ENCODE measurements at regions of chr4 and their contacts with region 1.

Region 1: GRCh38 chr4:173420324-173420752 is 21.4 kb upstream of the SCRG1 start:
- DNase-seq: no peak
- ATAC-seq: peak in 2 of 4 donors; percentile 44 to 56
- H3K4me3 ChIP-seq: peak overlapping the region in 3 of 12 donors; percentile 10 to 25 (median 22)
- H3K27ac ChIP-seq: no peak overlapping the region
- H3K4me1 ChIP-seq: peaks cover 0 to 8% (median 2%) of the 10 kb centered on the region in 12 donors
- H3K27me3 ChIP-seq: no peaks in the 10 kb centered on the region
- CTCF ChIP-seq: peak; percentile 25 to 68 (median 54)
- POLR2A ChIP-seq: no peak

Region 2: DNA sequence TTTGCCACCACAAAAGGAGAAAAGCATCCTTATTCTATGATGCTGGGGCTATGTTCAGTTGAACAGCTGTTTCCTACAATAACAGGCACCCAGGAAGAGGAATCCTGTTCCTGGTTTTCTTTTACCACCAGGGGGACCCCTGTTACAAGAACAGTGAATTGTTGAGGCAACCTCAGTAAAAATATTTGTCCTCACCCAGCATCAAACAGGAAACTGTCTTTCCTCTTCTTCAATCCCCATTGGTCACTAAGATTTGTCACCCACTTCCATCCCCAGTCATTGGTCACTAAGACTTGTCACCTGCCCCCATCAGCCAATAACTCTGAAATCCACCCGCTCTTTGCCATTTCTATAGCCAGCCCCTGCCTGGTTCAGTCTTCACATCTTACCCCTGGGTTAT is 395.2 kb before region 1 on chr4:
- intact Hi-C with region 1: loop called in 1 of 10 experiments (anchors 10 kb)
- DNase-seq: peak in 2 of 5 donors; percentile 28 to 57
- ATAC-seq: peak in 3 of 4 donors; percentile 26 to 82 (median 74)
- H3K4me3 ChIP-seq: no peak overlapping the region
- H3K27ac ChIP-seq: no peak overlapping the region
- H3K4me1 ChIP-seq: peaks cover 0 to 4% (median 0%) of the 10 kb centered on the region in 12 donors
- H3K27me3 ChIP-seq: no peaks in the 10 kb centered on the region
- CTCF ChIP-seq: peak; percentile 52 to 77 (median 66)
- POLR2A ChIP-seq: no peak

Region 3: DNA sequence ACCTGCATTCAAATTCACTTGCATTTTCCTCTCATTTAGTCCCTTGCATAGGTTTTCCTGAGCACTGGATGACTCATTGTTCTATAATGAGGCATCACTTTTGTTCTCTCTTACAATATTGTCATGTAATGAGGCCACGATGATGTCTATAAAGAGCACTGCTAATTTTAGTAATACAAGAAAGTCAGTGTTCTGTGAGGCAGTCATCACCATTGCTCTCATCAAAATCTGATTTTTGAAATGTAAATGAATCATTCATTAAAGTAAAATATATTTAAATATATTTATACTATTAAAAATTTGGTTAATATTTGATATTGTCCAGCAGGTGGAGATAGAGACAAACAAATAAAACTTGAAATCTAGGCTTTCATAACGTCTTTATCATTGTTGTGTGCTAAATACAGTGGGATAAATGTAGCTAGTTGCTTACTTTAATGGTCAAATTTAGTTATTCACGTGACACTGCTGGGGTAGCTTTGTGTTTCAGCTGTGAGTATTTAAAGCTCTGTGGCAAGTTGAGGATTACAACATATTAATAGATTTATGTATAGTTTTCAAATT is 101.6 kb before region 1 on chr4:
- intact Hi-C with region 1: loop called (anchors 1 to 2 kb)
- DNase-seq: no peak
- ATAC-seq: peak; percentile 78 to 89 (median 86)
- H3K4me3 ChIP-seq: no peak overlapping the region
- H3K27ac ChIP-seq: peak overlapping the region in 2 of 12 donors; percentile 11 to 20
- H3K4me1 ChIP-seq: peaks cover 0 to 14% (median 7%) of the 10 kb centered on the region in 12 donors
- H3K27me3 ChIP-seq: no peaks in the 10 kb centered on the region
- CTCF ChIP-seq: peak; percentile 41 to 73 (median 55)
- POLR2A ChIP-seq: no peak

Region 4: GRCh38 chr4:173494013-173494970 is 74.0 kb after region 1 on chr4:
- intact Hi-C with region 1: loop called (anchors 1 to 5 kb)
- DNase-seq: peak in 4 of 5 donors; percentile 46 to 65 (median 55)
- ATAC-seq: peak; percentile 79 to 95 (median 92)
- H3K4me3 ChIP-seq: peak overlapping the region in 11 of 12 donors; percentile 17 to 56 (median 44)
- H3K27ac ChIP-seq: peak overlapping the region in 1 of 12 donors; percentile 31
- H3K4me1 ChIP-seq: peaks cover 0 to 27% (median 9%) of the 10 kb centered on the region in 12 donors
- H3K27me3 ChIP-seq: peaks cover 0 to 17% (median 0%) of the 10 kb centered on the region in 9 donors
- CTCF ChIP-seq: peak; percentile 60 to 86 (median 74)
- POLR2A ChIP-seq: no peak

Region 5: DNA sequence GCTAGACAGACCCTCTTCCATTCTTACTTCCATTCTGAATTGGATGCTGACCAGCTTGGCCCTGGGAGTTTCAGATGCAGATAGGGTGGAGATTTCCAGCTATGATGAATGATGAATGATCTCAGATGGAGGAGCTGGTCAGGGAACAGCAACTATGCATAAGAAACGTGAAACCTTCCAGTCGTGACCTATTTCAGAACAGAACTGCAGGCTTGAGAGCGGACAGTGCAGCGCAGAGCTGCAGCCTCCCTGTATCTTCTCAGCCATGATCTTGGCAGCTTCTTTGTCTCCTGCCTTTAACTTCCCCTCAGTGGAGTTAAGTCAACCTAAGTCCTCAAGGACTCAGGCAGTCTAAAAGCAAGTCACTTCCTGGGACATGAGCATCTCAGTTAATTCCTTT is 152.9 kb after region 1 on chr4:
- intact Hi-C with region 1: no loop called
- DNase-seq: no peak
- ATAC-seq: peak in 2 of 4 donors; percentile 28 to 37
- H3K4me3 ChIP-seq: no peak overlapping the region
- H3K27ac ChIP-seq: peak overlapping the region in 3 of 12 donors; percentile 10 to 58 (median 16)
- H3K4me1 ChIP-seq: peaks cover 0 to 38% (median 4%) of the 10 kb centered on the region in 12 donors
- H3K27me3 ChIP-seq: no peaks in the 10 kb centered on the region
- CTCF ChIP-seq: no peak
- POLR2A ChIP-seq: no peak

Region 6: GRCh38 chr4:174156239-174156826 is 736.0 kb after region 1 on chr4:
- intact Hi-C with region 1: loop called in 1 of 10 experiments (anchors 5 kb)
- DNase-seq: no peak
- ATAC-seq: peak; percentile 72 to 82 (median 78)
- H3K4me3 ChIP-seq: peak overlapping the region in 2 of 12 donors; percentile 13 to 32
- H3K27ac ChIP-seq: peak overlapping the region in 4 of 12 donors; percentile 19 to 79 (median 28)
- H3K4me1 ChIP-seq: peaks cover 0 to 19% (median 0%) of the 10 kb centered on the region in 12 donors
- H3K27me3 ChIP-seq: no peaks in the 10 kb centered on the region
- CTCF ChIP-seq: peak; percentile 46 to 76 (median 62)
- POLR2A ChIP-seq: no peak

Measured in heart left ventricle (tissue), 16 donors.